ENCODE measurements at regions of chr17 and their contacts with region 1.

Region 1: DNA sequence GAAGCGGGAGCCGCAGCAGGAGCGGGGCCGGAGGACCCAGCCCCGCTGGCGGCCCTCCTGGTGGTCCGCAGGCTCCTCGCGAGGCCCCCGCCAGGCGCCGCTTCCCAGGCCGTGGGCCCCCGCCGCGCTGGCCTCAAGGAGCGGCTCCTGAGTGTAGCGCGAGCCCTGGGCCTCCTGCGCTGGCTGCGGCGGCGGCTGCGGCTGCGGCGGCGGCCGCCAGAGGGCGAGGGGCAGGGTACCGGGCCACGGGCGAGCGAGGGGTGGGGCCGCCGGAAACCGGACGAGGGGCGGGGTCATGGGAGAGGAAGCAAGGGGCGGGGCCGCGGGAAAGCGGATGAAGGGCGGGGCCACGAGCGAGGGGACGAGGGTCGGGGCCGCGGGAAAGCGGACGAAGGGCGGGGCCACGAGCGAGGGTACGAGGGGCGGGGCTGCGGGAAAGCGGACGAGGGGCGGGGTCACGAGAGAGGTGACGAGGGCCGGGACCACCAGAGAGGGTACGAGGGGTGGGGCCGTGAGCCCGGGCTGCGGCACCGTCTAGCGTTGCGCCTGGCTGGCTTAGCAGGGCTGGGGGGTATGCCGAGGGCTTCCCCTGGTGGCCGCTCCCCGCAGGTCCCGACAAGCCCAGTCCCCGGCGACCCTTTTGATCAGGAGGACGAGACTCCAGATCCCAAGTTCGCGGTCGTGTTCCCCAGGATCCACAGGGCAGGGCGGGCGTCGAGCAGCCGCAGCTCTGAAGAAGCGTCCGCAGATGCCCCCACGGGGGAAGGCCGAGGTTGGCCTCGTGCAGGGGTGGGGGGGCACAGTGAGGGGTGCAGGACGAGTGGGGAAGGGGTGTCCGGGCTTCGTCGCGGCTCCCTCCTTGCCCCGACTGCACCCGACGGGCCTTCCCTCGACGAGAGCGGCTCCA is 1.7 kb downstream of the MYO15B start:
- DNase-seq: peak; percentile 97
- H3K4me3 Mint-ChIP-seq: peak overlapping the region; percentile 69
- H3K27ac Mint-ChIP-seq: peak overlapping the region; percentile 47
- H3K4me1 Mint-ChIP-seq: peaks cover 15% of the 10 kb centered on the region
- H3K27me3 Mint-ChIP-seq: peaks cover 30% of the 10 kb centered on the region

Region 2: DNA sequence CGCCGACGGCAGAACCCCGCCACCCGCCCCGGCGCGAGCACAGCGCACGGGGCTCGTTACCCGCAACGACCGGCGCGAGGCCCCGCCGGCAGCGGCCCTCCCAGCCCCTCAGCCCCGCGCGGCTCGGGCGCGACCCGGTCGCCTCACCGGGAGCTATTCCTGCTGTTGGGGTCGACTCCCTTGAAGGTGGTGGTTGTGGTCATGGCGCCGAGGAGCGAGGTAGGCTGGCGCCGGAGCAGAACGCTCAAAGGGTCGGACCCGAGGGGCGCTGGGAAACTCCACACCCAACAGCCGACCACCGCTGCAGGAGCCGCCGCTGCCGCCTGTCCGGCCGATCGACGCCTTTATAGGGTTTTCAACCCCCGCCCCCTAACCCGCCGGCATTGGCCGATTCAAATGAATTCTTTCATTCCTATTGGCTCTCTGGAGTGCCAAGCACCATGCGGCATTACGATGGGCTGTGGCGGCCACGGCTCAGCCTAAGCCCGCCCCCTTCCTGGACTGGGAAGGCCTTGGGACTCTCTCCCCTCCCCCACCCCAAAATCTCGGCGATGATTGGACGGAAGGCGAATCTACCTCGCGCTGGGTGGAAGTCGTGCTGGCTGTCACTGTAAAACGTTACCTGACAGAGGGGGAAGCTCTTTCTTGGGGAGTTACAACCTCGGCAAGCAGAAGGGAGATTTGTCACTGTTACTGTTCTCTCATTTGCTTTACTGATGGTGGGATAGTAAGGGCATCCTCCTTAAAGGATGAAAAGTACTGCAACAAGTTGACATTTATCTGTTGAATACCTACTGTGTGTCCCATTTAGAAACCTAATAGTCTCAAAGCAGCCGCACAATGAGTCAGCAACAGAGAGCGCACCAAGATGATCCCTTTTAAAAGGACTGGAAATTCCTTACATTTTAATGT is 434.8 kb before region 1 on chr17 and contains the start of gene JPT1:
- CTCF ChIA-PET with region 1: no interaction called
- POLR2A ChIA-PET with region 1: no interaction called
- DNase-seq: peak; percentile 99
- H3K4me3 Mint-ChIP-seq: peak within 1 kb of the TSS; percentile 93
- H3K27ac Mint-ChIP-seq: peak within 1 kb of the TSS; percentile 86
- H3K4me1 Mint-ChIP-seq: peaks cover 41% of the 10 kb centered on the region
- H3K27me3 Mint-ChIP-seq: no peaks in the 10 kb centered on the region
- total RNA-seq, gene JPT1: 305 to 329 TPM

Region 3: GRCh38 chr17:75412455-75413317 is 176.6 kb before region 1 on chr17:
- CTCF ChIA-PET with region 1: no interaction called
- POLR2A ChIA-PET with region 1: no interaction called
- DNase-seq: peak; percentile 81
- H3K4me3 Mint-ChIP-seq: no peak overlapping the region
- H3K27ac Mint-ChIP-seq: peak overlapping the region; percentile 29
- H3K4me1 Mint-ChIP-seq: peaks cover 26% of the 10 kb centered on the region
- H3K27me3 Mint-ChIP-seq: peaks cover 12% of the 10 kb centered on the region

Region 4: DNA sequence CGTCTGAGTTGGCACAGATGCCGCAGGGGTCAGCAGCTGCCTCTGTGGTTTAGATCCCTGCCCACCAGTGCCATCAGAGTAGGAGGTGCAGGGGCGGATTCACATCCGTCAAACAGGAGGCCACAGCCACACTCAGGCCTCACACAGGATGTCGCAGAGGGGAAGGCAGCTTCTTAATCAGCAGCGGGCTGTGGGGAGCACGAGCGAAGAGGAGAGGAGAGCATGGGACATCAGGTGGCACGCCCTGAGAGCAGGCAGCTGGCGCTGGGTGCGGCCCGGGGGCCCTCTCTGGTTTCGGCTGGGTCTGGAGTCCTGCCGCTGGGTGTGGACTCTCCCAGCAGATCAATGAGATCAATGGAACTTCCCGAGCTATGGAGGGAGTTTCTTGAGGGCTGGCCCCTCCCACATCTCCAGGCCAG is 54.1 kb before region 1 on chr17:
- CTCF ChIA-PET with region 1: interaction called, 6 read pairs
- POLR2A ChIA-PET with region 1: interaction called, 12 read pairs
- DNase-seq: peak; percentile 88
- H3K4me3 Mint-ChIP-seq: peak overlapping the region; percentile 50
- H3K27ac Mint-ChIP-seq: peak overlapping the region; percentile 98
- H3K4me1 Mint-ChIP-seq: peaks cover 30% of the 10 kb centered on the region
- H3K27me3 Mint-ChIP-seq: no peaks in the 10 kb centered on the region

Region 5: DNA sequence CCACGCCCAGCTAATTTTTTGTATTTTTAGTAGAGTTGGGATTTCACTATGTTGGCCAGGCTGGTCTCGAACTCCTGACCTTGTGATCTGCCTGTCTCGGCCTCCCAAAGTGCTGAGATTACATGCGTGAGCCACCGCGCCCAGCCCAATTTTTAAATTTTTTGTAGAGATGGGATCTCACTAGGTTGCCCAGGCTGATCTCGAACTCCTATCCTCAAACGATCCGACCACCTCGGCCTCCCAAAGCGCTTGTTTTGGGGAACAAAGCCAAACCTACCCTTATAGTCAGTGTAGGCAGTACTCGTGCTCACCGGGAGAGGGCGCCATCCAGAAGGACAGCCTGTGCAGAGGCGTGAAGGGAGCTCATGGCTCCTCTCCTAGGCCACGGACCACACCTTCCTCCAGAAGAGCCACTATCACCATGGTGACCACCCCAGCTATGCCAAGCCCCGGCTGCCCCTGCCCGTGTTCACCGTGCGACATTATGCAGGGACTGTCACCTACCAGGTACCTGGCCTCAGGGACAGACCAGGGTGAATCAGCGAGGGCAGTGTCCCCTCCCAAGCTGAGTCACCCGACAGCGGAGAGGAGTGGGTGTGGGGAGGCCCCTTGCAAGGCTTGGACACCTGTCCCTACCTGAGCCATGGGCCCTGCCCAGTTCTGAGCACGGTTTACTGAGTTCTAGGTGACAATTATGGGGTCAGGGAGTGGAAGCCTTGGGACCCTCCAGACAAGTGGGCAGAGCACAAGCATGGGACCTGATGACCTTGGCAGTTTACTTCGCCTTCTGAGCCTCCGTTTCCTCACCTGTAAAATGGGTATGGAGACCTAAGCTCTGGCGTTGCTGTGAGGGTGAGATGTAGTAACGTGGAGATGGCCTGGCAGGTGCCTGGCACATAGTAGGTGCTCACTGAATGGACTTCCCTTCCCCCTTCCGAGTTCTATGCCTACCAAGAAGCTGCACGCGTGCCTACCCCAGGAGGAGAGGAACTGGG is 12.1 kb after region 1 on chr17:
- CTCF ChIA-PET with region 1: interaction called, 38 read pairs
- POLR2A ChIA-PET with region 1: interaction called, 4 read pairs
- DNase-seq: peak; percentile 74
- H3K4me3 Mint-ChIP-seq: no peak overlapping the region
- H3K27ac Mint-ChIP-seq: no peak overlapping the region
- H3K4me1 Mint-ChIP-seq: peaks cover 3% of the 10 kb centered on the region
- H3K27me3 Mint-ChIP-seq: no peaks in the 10 kb centered on the region

Region 6: GRCh38 chr17:75615301-75615700 is 26.0 kb after region 1 on chr17:
- CTCF ChIA-PET with region 1: no interaction called
- POLR2A ChIA-PET with region 1: no interaction called
- DNase-seq: no peak
- H3K4me3 Mint-ChIP-seq: no peak overlapping the region
- H3K27ac Mint-ChIP-seq: no peak overlapping the region
- H3K4me1 Mint-ChIP-seq: no peaks in the 10 kb centered on the region
- H3K27me3 Mint-ChIP-seq: no peaks in the 10 kb centered on the region

Region 7: DNA sequence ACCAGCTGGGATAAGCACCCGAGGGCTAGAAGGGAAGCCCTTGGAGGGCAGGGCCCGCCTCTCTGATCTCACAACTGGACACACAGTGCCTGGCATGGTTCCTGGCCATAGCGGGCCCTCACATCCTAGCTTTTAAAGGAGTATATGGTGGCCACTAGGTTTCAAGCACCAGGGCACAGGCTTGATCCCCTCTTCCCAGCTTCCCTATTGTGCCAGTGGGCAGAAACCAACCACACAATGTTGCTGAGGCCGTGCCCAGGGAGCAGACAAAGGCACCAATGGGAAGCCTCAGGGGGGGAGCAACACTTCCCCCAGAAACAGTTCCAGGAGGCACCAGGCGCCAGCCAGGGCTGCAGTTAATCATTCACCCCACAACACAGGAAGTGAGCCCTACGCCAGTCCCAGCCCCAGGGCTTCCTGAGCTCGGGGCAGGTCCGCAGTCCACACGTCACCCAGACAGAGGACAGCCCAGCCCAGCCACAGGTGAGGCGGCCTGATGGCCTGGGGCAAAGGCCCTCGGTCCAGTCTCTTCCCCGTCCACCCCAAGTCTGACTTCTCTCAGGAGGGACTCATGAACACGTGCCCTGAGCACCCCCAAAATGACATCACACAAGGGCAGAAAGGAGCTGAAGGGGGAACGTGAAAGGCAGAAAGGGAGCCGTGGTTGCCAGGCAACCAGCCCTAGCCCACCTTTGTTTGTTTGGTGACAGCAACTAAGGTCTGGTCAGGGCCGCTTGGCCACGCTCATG is 56.8 kb after region 1 on chr17:
- CTCF ChIA-PET with region 1: no interaction called
- POLR2A ChIA-PET with region 1: no interaction called
- DNase-seq: peak; percentile 34
- H3K4me3 Mint-ChIP-seq: no peak overlapping the region
- H3K27ac Mint-ChIP-seq: peak overlapping the region; percentile 28
- H3K4me1 Mint-ChIP-seq: peaks cover 17% of the 10 kb centered on the region
- H3K27me3 Mint-ChIP-seq: no peaks in the 10 kb centered on the region

Measured in activated CD4-positive, alpha-beta memory T cell treated with anti-CD3 and anti-CD28 coated beads, Interleukin-2, amount 10 ng/mL, durations not matched to agents 7 days and 5 days (primary cell).